Heart left ventricle (tissue), 16 donors: ENCODE measurements at regions of chr5 and their contacts with region 1.

Region 1: GRCh38 chr5:173278172-173278571 is 43.2 kb upstream of the NKX2-5 start:
- DNase-seq: peak; percentile 81 to 93 (median 83)
- ATAC-seq: peak; percentile 89 to 95 (median 93)
- H3K4me3 ChIP-seq: no peak overlapping the region
- H3K27ac ChIP-seq: peak overlapping the region; percentile 55 to 97 (median 83)
- H3K4me1 ChIP-seq: peaks cover 0 to 25% (median 4%) of the 10 kb centered on the region in 12 donors
- H3K27me3 ChIP-seq: peaks cover 0 to 24% (median 0%) of the 10 kb centered on the region in 9 donors
- CTCF ChIP-seq: no peak
- POLR2A ChIP-seq: no peak

Region 2: DNA sequence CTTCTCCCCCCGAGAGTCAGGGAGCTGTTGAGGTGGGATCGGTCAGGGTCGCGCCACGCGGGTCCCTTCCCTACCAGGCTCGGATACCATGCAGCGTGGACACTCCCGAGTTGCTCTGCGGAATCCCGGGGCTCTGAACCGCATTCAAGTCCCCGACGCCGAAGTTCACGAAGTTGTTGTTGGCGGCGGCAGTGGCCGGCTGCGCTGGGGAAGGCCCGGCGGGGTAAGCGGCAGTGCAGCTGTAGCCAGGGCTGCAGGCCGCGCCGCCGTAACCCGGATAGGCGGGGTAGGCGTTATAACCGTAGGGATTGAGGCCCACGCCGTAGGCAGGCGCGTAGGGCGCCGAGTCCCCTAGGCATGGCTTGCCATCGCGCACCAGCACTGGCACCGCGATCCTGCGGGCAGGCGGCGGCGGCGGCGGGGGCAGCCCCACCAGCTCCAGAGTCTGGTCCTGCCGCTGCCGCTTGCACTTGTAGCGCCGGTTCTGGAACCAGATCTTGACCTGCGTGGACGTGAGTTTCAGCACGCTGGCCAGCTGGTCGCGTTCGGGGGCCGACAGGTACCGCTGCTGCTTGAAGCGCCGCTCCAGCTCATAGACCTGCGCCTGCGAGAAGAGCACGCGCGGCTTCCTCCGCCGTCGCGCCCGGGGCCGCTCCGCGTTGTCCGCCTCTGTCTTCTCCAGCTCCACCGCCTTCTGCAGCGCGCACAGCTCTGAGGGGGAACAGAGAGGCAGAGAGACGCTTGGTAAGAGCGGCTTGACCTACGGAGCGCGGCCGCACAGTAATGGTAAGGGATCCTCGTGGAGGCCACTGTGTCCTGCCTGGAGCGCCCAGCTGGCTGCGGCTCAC is 45.4 kb before region 1 on chr5:
- intact Hi-C with region 1: loop called in 5 of 10 experiments (anchors 1 to 5 kb)
- DNase-seq: peak in 1 of 5 donors; percentile 34
- ATAC-seq: no peak
- H3K4me3 ChIP-seq: peak overlapping the region; percentile 47 to 93 (median 63)
- H3K27ac ChIP-seq: peak overlapping the region in 11 of 12 donors; percentile 46 to 95 (median 89)
- H3K4me1 ChIP-seq: peaks cover 0 to 58% (median 26%) of the 10 kb centered on the region in 12 donors
- H3K27me3 ChIP-seq: peaks cover 14 to 98% (median 69%) of the 10 kb centered on the region in 9 donors
- CTCF ChIP-seq: no peak
- POLR2A ChIP-seq: no peak

Region 3: DNA sequence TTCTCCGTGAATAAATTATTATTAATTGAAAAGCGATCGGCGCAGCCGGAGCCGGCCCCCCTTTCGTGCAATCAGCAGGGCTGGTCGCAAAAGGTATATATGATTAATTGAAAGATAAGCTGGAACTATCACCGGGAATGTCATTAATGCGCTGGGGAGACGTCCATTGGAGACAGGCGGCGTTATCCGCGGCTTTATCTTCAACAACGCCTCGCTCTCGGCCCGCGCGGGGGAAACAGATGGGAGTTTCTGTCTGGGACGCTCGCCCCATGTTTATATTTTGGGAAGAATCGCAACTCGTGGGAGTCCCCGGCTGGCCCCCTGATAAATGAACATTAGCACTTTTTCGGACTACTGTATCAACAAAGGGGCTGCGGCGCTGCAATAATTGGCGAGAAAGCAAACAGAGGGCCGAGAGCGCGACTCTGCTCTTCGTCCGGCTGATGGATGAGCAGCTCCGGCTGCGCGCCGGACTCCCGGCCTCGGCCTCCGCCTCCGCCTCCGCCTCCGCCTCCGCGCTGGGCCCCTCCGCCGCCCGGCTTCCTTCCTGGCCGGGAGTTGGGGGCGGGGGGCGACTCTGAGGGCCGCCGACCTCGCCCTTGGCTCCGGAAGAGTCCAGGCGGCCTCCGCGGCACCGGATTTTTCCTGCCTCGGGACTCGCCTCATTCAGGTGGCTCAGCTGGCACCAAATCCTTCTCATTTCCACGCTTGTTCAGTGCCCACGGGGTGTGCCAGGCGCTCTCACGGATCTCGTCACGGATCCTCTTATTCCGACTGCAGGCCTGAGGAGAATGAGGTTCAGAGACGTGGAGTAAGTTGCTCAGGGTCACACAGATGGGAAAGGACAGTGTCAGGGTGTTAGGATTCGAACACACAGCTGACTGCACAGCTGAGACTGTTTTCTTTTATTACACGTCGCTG is 39.6 kb before region 1 on chr5:
- intact Hi-C with region 1: loop called in 9 of 10 experiments (anchors 1 to 5 kb)
- DNase-seq: peak in 1 of 5 donors; percentile 29
- ATAC-seq: no peak
- H3K4me3 ChIP-seq: peak overlapping the region; percentile 32 to 62 (median 46)
- H3K27ac ChIP-seq: peak overlapping the region; percentile 33 to 95 (median 85)
- H3K4me1 ChIP-seq: peaks cover 0 to 50% (median 16%) of the 10 kb centered on the region in 12 donors
- H3K27me3 ChIP-seq: peaks cover 16 to 99% (median 68%) of the 10 kb centered on the region in 9 donors
- CTCF ChIP-seq: no peak
- POLR2A ChIP-seq: no peak

Region 4: GRCh38 chr5:173245319-173246134 is 32.6 kb before region 1 on chr5:
- intact Hi-C with region 1: loop called in 5 of 10 experiments (anchors 1 to 5 kb)
- DNase-seq: peak in 2 of 5 donors; percentile 37 to 56
- ATAC-seq: peak; percentile 13 to 50 (median 48)
- H3K4me3 ChIP-seq: peak overlapping the region in 9 of 12 donors; percentile 38 to 60 (median 49)
- H3K27ac ChIP-seq: peak overlapping the region; percentile 76 to 98 (median 90)
- H3K4me1 ChIP-seq: peaks cover 0 to 38% (median 7%) of the 10 kb centered on the region in 12 donors
- H3K27me3 ChIP-seq: peaks cover 7 to 99% (median 38%) of the 10 kb centered on the region in 9 donors
- CTCF ChIP-seq: no peak
- POLR2A ChIP-seq: no peak